ENCODE measurements at regions of chr16 and their contacts with region 1.

Region 1: DNA sequence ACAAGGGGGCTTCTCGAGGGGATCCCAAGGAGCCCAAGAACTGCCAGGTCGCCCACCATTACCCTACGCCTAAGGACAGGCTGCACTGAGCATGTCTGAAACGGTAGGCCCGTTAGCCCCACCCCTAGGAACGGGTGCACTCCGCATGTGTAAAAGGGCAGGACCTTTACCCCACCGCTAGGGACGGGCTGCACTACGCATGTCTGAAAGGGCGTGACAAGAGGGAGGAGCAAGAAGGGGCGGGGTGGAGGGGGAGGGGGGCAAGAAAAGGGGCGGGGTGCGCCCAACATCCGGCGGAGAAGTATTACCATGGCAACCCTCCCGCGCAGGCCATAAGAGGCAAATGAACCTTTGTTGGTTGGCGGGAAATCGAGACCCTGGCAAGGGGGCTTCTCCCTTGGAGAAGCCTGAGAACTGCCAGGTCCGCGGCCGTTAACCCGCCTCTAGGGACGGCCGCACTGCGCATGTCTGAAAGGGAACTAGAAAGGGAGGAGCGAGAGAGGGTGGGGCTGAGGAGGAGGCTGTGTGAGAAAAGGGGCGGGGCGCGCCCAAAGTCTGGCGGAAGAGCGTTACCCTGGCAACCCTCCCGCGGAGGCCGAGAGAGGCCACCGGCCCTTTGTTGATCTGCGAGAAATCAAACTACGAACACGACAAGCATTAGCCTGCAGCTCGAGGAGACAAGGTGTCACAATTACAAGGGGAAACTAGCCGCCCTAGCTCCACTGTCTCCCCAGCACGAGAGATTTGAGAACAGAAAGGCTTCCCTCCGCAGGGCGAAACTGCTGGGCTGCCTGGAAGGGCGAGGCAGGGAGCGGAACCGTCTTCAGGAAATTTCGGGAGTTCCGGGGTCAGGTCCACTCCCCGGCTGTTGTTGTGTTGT is 2046.8 kb downstream of the TP53TG3F start:
- DNase-seq: peak in 2 of 4 donors; percentile 16 to 61
- ATAC-seq: no peak
- H3K4me3 ChIP-seq: no peak overlapping the region
- H3K27ac ChIP-seq: no peak overlapping the region
- H3K4me1 ChIP-seq: no peaks in the 10 kb centered on the region
- H3K27me3 ChIP-seq: no peaks in the 10 kb centered on the region
- CTCF ChIP-seq: no peak
- POLR2A ChIP-seq: no peak

Region 2: GRCh38 chr16:35140293-35140986 is 365.8 kb before region 1 on chr16:
- intact Hi-C with region 1: no loop called
- DNase-seq: no peak
- ATAC-seq: no peak
- H3K4me3 ChIP-seq: no peak overlapping the region
- H3K27ac ChIP-seq: no peak overlapping the region
- H3K4me1 ChIP-seq: no peaks in the 10 kb centered on the region
- H3K27me3 ChIP-seq: no peaks in the 10 kb centered on the region
- CTCF ChIP-seq: no peak
- POLR2A ChIP-seq: no peak

Region 3: GRCh38 chr16:35305476-35305875 is 200.8 kb before region 1 on chr16:
- intact Hi-C with region 1: no loop called
- DNase-seq: no peak
- ATAC-seq: no peak
- H3K4me3 ChIP-seq: no peak overlapping the region
- H3K27ac ChIP-seq: no peak overlapping the region
- H3K4me1 ChIP-seq: no peaks in the 10 kb centered on the region
- H3K27me3 ChIP-seq: no peaks in the 10 kb centered on the region
- CTCF ChIP-seq: no peak
- POLR2A ChIP-seq: no peak

Region 4: GRCh38 chr16:35449663-35450062 is 56.6 kb before region 1 on chr16:
- intact Hi-C with region 1: loop called (anchors 10 kb)
- DNase-seq: no peak
- ATAC-seq: no peak
- H3K4me3 ChIP-seq: no peak overlapping the region
- H3K27ac ChIP-seq: no peak overlapping the region
- H3K4me1 ChIP-seq: no peaks in the 10 kb centered on the region
- H3K27me3 ChIP-seq: no peaks in the 10 kb centered on the region
- CTCF ChIP-seq: no peak
- POLR2A ChIP-seq: no peak